ENCODE measurements at regions of chr22 and their contacts with region 1.

Region 1: DNA sequence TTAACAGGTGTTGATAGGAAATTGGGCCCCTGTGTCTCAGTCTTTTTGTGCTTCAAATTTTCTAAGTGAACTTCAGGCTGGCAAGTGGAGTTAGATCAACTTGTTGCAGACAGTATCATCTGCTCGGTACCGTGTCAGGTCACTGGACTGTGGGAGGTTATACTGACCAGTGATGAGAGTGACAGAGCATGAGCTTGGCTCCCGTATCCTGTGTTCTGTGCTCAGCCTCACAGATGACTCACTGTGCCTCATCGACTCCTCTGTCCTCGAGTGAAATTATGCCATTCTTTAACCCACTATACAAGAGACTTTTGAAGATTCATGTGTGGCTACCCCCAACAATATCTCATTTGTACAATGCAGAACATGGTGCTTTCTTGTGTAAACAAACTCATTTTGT is 7.9 kb downstream of the GRAP2 start:
- DNase-seq: peak; percentile 78
- H3K4me3 Mint-ChIP-seq: peak overlapping the region; percentile 84
- H3K27ac Mint-ChIP-seq: peak overlapping the region; percentile 91
- H3K4me1 Mint-ChIP-seq: peaks cover 77% of the 10 kb centered on the region
- H3K27me3 Mint-ChIP-seq: no peaks in the 10 kb centered on the region

Region 2: GRCh38 chr22:39825661-39826102 is 83.1 kb before region 1 on chr22:
- intact Hi-C with region 1: no loop called
- DNase-seq: peak; percentile 61
- H3K4me3 Mint-ChIP-seq: no peak overlapping the region
- H3K27ac Mint-ChIP-seq: peak overlapping the region; percentile 51
- H3K4me1 Mint-ChIP-seq: peaks cover 9% of the 10 kb centered on the region
- H3K27me3 Mint-ChIP-seq: peaks cover 16% of the 10 kb centered on the region

Region 3: DNA sequence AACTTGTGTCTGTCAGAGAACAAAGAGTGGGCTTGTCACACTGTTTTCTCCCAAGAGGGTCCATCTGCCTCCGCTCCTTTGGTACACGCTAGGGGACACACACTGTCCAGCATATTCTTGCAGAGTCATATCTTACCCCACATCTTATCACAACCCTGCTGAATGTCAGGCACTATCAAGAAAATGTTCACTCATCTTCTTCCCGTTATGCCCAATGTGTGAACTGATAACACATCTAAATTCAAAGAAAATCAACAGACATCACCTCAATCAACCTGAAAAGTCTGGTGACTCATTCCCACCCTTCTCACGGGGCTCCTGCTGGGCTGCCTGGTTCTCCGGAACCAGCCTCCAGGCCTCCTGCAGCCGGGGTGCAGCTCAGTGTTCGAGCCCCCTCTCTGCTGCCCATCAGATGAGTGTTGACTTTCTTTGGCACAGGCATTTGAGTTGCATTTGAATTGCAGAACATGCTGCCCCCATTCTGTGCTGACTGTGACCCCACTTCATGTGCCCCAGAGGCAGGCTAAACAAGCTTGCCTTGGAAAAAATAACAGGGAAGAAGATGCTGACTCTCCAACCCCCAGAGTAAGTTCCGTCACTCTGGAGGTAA is 11.5 kb after region 1 on chr22:
- intact Hi-C with region 1: loop called (anchors 1 kb)
- DNase-seq: peak; percentile 86
- H3K4me3 Mint-ChIP-seq: peak overlapping the region; percentile 84
- H3K27ac Mint-ChIP-seq: peak overlapping the region; percentile 95
- H3K4me1 Mint-ChIP-seq: peaks cover 76% of the 10 kb centered on the region
- H3K27me3 Mint-ChIP-seq: no peaks in the 10 kb centered on the region

Region 4: DNA sequence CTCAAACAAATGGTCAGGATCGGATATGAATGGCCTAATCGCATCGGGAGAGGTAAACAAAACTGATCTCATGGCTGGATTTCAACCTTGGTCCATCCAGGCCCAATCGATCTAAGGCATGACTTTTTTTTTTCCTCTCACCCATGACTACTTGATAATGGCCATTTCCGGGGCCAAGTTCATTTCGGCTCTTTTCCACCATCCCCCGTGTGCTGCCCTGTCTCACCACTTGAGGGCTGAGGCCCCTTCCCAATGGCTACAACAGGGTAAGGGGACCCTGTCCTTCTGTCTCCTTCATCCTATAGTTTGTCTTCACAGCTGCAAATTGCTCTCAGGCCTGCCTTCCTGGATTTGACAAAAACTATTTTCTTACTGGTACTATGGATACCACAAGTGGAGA is 18.8 kb after region 1 on chr22:
- intact Hi-C with region 1: loop called (anchors 1 kb)
- DNase-seq: peak; percentile 77
- H3K4me3 Mint-ChIP-seq: no peak overlapping the region
- H3K27ac Mint-ChIP-seq: no peak overlapping the region
- H3K4me1 Mint-ChIP-seq: peaks cover 39% of the 10 kb centered on the region
- H3K27me3 Mint-ChIP-seq: no peaks in the 10 kb centered on the region

Region 5: DNA sequence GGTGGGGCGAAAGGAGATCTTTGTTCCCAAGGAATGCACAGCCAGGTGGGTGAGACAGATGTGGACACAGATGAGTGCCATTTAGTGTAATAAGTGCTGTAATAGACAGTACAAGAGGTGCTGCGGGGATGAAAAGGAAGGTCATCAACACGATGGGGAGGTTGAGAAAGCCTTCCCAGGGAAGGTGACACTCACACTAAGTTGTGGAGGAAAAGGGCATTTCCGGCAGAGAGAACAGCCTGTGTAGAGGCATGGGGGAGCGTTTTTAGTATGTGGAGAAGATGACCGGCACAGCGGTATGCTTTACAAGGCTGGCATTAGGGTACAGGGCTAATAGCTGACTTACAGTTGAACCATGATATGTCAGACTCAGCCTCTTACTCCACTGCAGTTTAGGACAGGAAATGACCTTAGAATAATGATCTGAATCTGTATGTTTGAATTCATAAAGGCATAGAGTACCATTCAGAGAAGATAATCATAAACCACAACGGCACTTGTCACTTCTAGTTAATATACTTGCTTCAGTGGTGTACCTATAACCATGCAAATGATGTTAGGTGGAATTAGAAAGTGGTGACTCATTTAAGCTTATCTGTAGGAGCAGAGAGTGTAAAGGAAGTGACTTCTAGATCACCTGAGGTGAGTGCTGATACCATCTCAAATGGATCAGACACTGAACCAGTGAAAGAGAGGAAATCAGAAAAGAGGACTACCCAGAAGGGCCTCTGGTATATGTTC is 146.6 kb after region 1 on chr22:
- intact Hi-C with region 1: no loop called
- DNase-seq: peak; percentile 77
- H3K4me3 Mint-ChIP-seq: peak overlapping the region; percentile 71
- H3K27ac Mint-ChIP-seq: peak overlapping the region; percentile 95
- H3K4me1 Mint-ChIP-seq: peaks cover 57% of the 10 kb centered on the region
- H3K27me3 Mint-ChIP-seq: no peaks in the 10 kb centered on the region

Region 6: DNA sequence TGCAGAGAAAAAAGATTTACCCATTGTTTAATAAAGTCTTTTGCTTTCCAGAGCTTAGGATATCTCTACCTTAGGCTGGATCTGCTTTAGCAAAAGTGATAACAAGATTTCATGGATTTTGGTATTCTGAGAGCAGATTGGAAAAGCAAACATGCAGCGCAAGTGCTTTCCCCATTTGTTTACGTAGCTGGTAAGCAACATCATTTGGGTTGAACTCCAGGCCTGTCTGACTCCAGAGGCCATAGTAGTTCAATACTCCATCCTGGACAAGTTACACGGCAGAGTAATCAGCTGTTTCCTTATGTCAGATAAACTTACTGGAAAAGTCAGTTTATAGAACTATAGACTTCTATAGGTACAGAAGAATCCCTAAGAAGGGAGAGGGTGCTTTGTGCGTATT is 228.4 kb after region 1 on chr22:
- intact Hi-C with region 1: no loop called
- DNase-seq: no peak
- H3K4me3 Mint-ChIP-seq: no peak overlapping the region
- H3K27ac Mint-ChIP-seq: no peak overlapping the region
- H3K4me1 Mint-ChIP-seq: peaks cover 3% of the 10 kb centered on the region
- H3K27me3 Mint-ChIP-seq: no peaks in the 10 kb centered on the region